ENCODE measurements at regions of chr2 and their contacts with region 1.

Region 1: DNA sequence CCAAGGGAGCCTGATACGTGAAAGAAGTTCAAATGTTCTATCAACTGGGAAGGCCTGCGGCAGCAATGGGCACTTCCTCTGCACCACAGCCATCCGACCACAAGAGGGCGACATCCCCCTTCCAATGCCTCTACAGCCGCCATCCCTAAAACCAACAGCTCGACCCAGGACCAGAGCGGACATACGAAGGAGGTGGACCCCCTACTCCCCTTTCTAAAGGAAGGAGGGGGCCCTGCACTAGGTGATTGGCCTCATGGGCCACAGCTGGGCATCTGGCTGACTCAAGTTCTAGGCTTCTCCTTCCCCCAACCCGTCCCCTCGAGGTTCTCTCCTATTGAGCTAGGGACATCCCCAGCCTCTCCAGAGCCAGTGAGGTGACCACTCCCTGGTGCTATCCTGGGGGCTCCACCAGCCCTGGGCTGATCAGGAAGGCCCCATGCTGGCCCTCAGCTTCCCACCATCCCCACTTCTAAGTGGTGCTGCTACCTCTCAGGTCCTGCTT is 217.2 kb downstream of the TNS1 start:
- DNase-seq: no peak
- H3K4me3 ChIP-seq: no peak overlapping the region
- CTCF ChIP-seq: peak; percentile 92

Region 2: GRCh38 chr2:217743966-217744761 is 41.4 kb before region 1 on chr2:
- CTCF ChIA-PET with region 1: no interaction called
- POLR2A ChIA-PET with region 1: no interaction called
- DNase-seq: no peak
- H3K4me3 ChIP-seq: no peak overlapping the region
- CTCF ChIP-seq: no peak

Region 3: DNA sequence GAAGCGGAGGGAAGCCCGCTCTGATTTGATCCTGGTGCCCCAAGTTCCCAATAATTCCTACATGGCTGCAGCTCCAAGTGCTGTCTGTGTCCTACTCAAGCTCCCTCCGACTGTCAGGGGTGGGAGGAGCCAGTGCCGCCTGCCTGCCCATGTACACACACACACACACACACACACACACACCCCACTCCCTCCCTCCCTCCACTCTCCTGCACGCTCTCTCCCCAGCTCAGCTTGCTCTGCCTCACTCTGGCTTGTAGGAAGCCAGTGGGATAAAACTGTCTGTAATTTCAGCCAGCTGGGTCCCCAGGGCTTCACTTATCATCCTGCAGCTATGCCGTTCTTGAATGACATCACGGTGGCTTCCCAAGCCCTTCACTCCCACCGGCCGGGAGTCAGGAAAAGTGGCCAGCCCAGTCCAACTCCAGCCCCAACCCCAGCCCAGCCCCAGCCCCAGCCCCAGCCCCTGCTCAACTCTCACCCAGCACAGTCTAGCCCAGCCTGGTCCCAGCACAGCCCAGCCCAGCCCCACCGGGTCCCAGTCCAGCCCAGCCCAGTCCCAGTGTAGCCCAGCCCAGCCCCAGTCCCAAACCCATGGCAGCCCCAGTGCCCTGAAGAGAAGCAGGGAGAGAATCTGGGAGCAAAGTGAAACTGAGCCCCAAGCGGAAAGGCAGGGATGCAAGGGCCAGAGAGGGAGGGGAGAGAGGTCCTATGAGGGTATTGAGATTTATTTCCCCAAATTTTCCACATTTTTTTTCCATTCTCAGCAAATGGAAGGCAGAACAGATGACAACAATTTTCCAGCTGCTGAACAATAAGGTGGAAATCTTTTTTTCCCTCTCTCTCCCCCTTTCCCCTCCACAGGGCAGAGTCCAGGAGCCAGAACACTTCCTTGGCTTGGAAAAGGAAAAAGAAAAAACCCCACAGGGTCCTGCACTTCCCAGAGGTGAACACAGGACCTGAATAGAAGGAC is 73.2 kb after region 1 on chr2:
- CTCF ChIA-PET with region 1: interaction called, 13 read pairs
- POLR2A ChIA-PET with region 1: interaction called, 3 read pairs
- DNase-seq: peak; percentile 96
- H3K4me3 ChIP-seq: no peak overlapping the region
- CTCF ChIP-seq: no peak

Region 4: DNA sequence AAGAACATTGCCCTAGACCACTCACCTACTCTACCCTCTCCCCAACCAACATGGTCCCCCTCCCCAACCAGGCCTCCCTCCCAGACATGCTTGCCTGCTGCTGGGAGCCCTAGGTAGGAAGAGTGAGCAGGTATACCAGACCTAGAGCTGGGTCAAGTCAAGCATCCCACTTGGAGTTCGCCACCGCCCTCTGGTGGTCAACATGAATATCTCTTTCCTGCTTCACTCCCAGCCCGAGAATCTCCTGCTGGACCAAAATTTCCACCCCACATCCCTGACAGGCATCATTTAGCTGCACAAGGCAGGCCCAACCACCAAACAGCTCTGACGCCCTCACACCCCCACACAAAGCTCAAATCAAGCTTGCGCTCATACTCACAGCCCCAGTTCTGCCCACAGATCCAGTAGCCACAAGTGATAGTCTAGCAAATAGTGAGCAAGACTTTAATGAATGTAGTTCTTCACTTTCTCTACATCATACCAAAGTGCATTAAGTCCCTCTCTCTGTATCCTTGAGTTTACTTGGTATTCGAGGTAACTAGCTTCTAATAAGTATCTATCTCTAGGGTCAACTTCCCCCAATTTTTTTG is 101.2 kb after region 1 on chr2:
- CTCF ChIA-PET with region 1: interaction called, 122 read pairs
- POLR2A ChIA-PET with region 1: no interaction called
- DNase-seq: no peak
- H3K4me3 ChIP-seq: no peak overlapping the region
- CTCF ChIP-seq: peak; percentile 82

Region 5: DNA sequence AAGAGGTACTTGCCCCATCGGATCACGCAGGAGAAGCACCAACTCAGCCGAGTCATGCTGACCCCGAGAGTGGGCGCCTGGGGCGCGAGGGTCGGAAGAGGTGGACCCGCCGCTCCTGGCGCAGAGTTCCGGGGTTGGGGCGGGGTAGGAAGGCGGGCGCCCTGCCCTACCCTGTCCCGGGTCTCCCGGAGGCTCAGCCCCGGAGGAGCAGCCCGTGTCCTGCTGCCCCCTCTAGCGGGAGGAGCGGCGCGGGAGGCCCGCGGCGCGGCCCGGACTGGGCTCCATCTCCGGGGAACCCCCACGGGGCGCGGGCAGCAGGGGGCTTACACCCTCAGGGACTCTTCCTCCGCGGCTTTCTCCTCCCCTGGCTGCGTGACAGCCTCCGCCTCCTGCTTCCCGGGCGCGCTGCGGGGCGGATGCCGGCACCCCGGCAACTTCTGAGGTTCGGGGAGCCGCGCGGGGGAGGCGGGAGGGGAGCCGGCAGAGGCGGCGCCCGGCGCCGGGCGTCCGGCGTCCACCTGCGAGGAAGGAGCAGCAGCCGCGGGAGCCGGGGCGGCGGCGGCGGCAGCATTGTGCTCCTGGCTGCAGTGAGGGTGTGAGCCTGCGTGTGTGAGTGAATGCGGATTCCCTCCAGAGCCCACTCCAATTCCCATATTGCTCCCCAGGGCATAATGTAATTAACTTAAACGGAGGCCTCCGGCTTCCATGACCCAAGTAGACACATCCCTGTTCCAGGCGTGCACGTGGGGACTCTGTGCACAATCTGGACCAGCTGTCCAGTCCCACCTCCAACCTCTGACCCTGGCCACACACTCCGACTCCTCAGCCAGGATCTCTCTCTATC is 224.8 kb after region 1 on chr2:
- CTCF ChIA-PET with region 1: interaction called, 13 read pairs
- POLR2A ChIA-PET with region 1: no interaction called
- DNase-seq: no peak
- H3K4me3 ChIP-seq: peak overlapping the region; percentile 74
- CTCF ChIP-seq: peak; percentile 82

Region 6: DNA sequence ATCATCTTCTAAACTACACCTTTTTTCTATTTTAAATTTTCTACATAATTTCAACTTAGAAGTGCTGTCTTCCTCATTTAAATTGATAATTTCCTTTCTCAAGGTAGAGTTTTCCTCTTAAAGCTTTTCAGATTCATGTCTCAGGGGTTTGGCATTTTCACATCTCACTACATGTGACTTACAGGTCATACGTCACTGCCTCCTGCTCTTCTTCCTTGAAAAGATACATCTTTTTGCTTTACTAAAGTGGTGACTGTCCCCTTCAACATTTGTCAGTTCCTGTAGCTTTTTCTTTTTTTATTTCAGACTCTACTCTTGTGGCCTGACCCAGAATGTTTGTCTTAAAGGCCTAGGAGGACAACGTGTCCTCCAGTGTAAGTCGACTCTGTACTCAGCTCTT is 266.3 kb after region 1 on chr2:
- CTCF ChIA-PET with region 1: interaction called, 15 read pairs
- POLR2A ChIA-PET with region 1: no interaction called
- DNase-seq: no peak
- H3K4me3 ChIP-seq: no peak overlapping the region
- CTCF ChIP-seq: no peak

Measured in AG04449 (cell line).